Naive thymus-derived CD4-positive, alpha-beta T cell (primary cell): ENCODE measurements at regions of chr1 and their contacts with region 1.

Region 1: GRCh38 chr1:153545067-153546055 is at the start of gene S100A4:
- DNase-seq: peak; percentile 50 to 93 (median 89)
- ATAC-seq: peak; percentile 84
- H3K4me3 ChIP-seq: peak within 1 kb of the TSS; percentile 69
- H3K4me3 Mint-ChIP-seq: peak within 1 kb of the TSS; percentile 85 to 97 (median 88)
- H3K27ac ChIP-seq: peak within 1 kb of the TSS; percentile 79
- H3K27ac Mint-ChIP-seq: peak within 1 kb of the TSS; percentile 93 to 99 (median 98)
- H3K4me1 ChIP-seq: peaks cover 53 to 69% of the 10 kb centered on the region in 2 donors
- H3K4me1 Mint-ChIP-seq: peaks cover 62 to 87% (median 74%) of the 10 kb centered on the region in 7 donors
- H3K27me3 ChIP-seq: no peaks in the 10 kb centered on the region
- H3K27me3 Mint-ChIP-seq: no peaks in the 10 kb centered on the region
- total RNA-seq, gene S100A4: 54.0 to 766 (median 204) TPM

Region 2: DNA sequence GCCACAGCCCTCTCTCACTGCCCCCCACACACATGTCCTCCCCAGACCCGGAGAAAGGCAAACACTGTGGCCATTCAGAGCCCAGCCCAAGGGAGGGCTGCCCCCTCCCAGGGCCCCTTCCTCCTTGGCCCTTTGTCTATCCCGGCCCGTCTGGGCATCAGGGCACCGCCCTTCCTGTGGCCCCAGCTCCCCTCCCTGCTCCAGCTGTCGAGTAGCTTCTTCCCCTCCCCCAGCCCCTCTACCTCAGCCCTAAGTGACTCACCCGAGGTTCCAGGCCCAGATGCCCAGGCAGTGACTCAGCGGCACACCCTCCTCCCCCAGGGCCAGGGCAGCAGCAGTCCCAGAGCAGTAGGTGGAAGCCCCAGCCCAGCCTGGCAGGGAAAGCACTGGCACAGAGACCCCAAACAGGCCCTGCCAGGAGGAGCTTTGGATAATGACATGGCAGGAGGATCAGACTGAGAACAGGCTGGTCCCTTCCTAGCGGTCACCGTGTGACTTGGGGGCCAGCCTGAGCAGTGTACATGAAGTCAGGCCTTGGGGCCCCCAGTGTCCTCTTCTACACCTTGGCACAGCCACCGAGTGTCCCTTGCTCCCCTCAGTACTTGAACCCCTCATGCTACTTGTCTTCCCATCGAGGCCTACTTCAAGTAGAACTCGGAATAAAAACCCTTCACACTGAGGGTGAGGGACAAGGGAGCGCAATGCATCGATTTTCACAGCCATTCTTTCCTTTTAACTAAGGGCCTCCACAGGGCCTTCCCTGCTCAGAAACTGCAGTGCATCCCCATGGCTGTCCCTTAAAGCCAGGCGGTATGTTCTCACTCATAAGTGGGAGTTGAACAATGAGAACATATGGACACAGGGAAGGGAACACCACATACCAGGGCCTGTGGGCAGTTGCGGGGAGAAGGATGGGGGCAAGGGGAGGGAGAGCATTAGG is 21.3 kb after region 1 on chr1:
- CTCF ChIA-PET with region 1: interaction called, 27 read pairs
- POLR2A ChIA-PET with region 1: interaction called, 10 read pairs
- intact Hi-C with region 1: loop called (anchors 1 kb)
- DNase-seq: peak in 3 of 9 donors; percentile 38 to 82 (median 44)
- ATAC-seq: peak; percentile 88
- H3K4me3 ChIP-seq: no peak overlapping the region
- H3K4me3 Mint-ChIP-seq: peak overlapping the region in 3 of 10 donors; percentile 16 to 57 (median 56)
- H3K27ac ChIP-seq: peak overlapping the region; percentile 17
- H3K27ac Mint-ChIP-seq: peak overlapping the region in 5 of 9 donors; percentile 9 to 92 (median 87)
- H3K4me1 ChIP-seq: peaks cover 12 to 13% of the 10 kb centered on the region in 2 donors
- H3K4me1 Mint-ChIP-seq: peaks cover 25 to 32% (median 28%) of the 10 kb centered on the region in 7 donors
- H3K27me3 ChIP-seq: no peaks in the 10 kb centered on the region
- H3K27me3 Mint-ChIP-seq: peaks cover 0 to 6% (median 0%) of the 10 kb centered on the region in 5 donors